Sigmoid colon (tissue), 7 donors: ENCODE measurements at regions of chr1 and their contacts with region 1.

Region 1: GRCh38 chr1:204128964-204129896 is 22.6 kb downstream of the ETNK2 start:
- DNase-seq: peak; percentile 91
- H3K4me3 ChIP-seq: peak overlapping the region in 3 of 4 donors; percentile 15 to 33 (median 24)
- H3K27ac ChIP-seq: peak overlapping the region; percentile 27 to 56 (median 42)
- H3K4me1 ChIP-seq: peaks cover 0 to 50% (median 40%) of the 10 kb centered on the region in 4 donors
- H3K27me3 ChIP-seq: no peaks in the 10 kb centered on the region
- CTCF ChIP-seq: peak; percentile 86 to 97 (median 92)
- EP300 ChIP-seq: no peak
- POLR2A ChIP-seq: no peak

Region 2: DNA sequence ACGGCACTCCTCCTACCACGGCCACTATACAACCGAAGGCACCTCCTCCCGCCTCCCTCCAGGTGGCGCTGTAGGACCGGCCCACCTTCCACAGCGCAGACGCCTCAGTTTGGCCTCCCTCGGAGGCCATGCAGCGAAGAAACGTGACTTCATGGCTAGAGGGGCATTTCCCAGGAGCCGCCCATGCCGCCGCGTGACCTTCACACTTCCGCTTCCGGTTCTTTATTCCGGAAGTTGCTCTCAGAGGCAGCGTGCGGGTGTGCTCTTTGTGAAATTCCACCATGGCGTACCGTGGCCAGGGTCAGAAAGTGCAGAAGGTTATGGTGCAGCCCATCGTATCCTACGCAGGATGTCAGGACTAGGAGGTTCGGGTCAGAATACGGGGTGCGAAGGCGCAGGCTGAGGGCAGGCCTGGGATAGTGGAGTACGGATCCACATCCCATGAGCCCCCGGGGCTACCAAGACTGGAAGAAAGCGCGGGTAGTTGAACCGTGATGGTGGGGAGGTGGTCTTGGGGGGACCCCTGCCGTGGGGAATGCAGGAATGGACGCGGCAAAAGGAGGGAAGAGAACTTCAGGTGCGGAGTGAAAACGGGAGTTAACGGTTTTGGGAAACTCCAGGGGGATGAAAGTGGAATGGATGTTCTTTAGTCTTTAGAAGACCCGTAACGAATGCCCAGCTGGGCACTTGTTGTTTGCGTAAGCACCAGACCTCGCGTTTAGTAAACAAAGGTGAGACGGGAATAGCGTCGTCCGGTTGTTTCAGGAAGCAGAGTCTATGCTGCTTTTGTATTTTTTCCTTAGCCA is 267.6 kb before region 1 on chr1 and contains the start of gene SNRPE:
- intact Hi-C with region 1: loop called (anchors 1 kb)
- DNase-seq: peak; percentile 98
- H3K4me3 ChIP-seq: peak within 1 kb of the TSS; percentile 61 to 92 (median 77)
- H3K27ac ChIP-seq: peak within 1 kb of the TSS; percentile 58 to 79 (median 71)
- H3K4me1 ChIP-seq: peaks cover 0 to 29% (median 25%) of the 10 kb centered on the region in 4 donors
- H3K27me3 ChIP-seq: no peaks in the 10 kb centered on the region
- CTCF ChIP-seq: peak; percentile 75 to 94 (median 88)
- EP300 ChIP-seq: peak in 1 of 4 donors; percentile 49
- POLR2A ChIP-seq: peak in 1 of 2 donors; percentile 30
- total RNA-seq, gene SNRPE: 23.1 to 66.0 (median 43.4) TPM

Region 3: DNA sequence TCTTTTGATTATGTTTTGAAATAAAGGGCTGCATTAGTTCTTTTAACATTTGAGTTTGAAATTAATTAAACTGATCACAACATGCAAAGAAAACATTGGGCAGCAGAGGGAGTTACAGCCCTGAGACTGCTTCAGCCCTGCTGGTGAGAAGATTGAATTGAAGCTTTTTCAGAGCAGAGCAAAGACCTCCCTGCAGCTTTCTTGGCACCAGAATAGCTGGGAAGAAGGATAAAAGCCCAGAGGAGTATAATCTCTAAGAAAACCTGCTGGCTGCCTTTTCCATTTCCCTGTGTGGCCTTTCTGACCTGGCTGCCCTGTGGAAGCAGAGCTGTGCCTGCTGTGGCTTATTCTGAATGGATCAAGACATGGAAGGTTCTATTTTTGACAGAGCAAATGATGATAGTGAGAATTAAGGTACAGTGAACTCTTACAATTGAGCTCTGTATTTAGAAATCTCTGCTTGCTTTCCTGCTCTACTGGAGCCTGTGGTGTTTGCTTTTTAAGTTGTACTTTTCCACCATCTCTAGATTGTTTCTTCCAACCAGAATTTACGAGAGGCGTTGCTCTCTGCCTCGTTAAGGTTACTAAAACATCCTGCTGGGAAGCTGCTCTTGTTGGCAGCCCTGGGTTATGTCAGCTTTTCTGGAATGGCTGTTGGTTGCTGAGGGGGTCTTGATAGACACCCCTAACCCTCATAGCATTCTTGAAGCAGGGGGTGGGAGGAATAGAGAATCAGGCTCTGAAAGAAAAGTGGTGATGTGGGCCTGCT is 257.9 kb before region 1 on chr1:
- intact Hi-C with region 1: loop called (anchors 1 kb)
- DNase-seq: peak; percentile 69
- H3K4me3 ChIP-seq: peak overlapping the region in 1 of 4 donors; percentile 2
- H3K27ac ChIP-seq: peak overlapping the region in 3 of 4 donors; percentile 77 to 80 (median 77)
- H3K4me1 ChIP-seq: peaks cover 0 to 25% (median 22%) of the 10 kb centered on the region in 4 donors
- H3K27me3 ChIP-seq: no peaks in the 10 kb centered on the region
- CTCF ChIP-seq: peak; percentile 85 to 98 (median 96)
- EP300 ChIP-seq: no peak
- POLR2A ChIP-seq: no peak

Region 4: DNA sequence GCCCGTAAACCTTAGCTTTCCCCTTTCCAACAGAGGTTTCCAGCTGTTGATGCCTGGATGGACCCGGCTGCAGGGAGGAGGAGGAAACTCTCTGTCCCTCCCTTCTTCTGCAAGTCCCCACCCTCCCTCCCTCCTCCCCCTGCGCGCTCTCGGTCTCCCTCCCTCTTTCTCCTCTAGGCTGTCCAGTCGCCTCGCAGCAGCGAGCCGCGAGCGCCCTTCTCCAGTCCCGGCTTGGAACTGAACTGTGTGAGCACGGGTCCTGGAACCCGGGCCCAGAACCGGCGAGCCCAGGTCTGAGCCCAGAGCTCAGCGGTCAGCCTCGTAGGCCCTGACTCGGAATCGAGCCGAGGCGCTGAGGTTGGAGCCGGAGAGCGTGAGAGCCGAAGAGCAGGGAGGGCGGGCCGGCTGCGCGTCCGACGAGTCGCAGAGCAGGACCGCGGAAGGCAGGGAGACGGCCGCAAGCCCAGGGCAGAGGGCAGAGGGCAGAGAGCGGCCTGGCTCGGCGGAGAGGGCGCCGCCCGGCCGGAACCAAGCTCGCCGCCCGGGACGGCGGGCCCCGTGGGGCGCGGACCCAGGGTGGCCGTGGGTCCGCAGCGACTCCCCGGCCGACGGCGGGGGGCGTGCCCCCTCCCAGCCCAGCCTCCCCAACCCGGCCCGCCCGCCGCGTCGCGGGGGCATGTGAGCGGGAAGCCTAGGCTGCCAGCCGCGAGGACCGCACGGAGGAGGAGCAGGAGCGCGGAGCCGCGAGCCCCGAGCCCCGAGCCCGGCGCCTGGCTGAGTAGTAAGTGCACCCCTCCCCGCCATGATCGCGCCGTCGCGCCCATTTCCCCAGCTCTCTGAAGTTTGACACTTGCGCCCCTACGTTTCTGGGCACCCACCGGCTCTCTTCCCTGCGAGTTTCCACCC is 56.0 kb before region 1 on chr1 and contains the start of gene SOX13:
- intact Hi-C with region 1: loop called (anchors 1 kb)
- DNase-seq: peak; percentile 97
- H3K4me3 ChIP-seq: peak within 1 kb of the TSS; percentile 81 to 92 (median 86)
- H3K27ac ChIP-seq: peak within 1 kb of the TSS; percentile 83 to 96 (median 94)
- H3K4me1 ChIP-seq: peaks cover 0 to 34% (median 31%) of the 10 kb centered on the region in 4 donors
- H3K27me3 ChIP-seq: no peaks in the 10 kb centered on the region
- CTCF ChIP-seq: no peak
- EP300 ChIP-seq: no peak
- POLR2A ChIP-seq: peak; percentile 96
- total RNA-seq, gene SOX13: 28.5 to 58.4 (median 30.0) TPM

Region 5: GRCh38 chr1:204089044-204089751 is 40.0 kb before region 1 on chr1:
- intact Hi-C with region 1: loop called (anchors 1 kb)
- DNase-seq: peak; percentile 97
- H3K4me3 ChIP-seq: peak overlapping the region in 3 of 4 donors; percentile 27 to 36 (median 33)
- H3K27ac ChIP-seq: peak overlapping the region; percentile 81 to 98 (median 96)
- H3K4me1 ChIP-seq: peaks cover 0 to 98% (median 94%) of the 10 kb centered on the region in 4 donors
- H3K27me3 ChIP-seq: no peaks in the 10 kb centered on the region
- CTCF ChIP-seq: no peak
- EP300 ChIP-seq: peak; percentile 85 to 96 (median 89)
- POLR2A ChIP-seq: no peak

Region 6: DNA sequence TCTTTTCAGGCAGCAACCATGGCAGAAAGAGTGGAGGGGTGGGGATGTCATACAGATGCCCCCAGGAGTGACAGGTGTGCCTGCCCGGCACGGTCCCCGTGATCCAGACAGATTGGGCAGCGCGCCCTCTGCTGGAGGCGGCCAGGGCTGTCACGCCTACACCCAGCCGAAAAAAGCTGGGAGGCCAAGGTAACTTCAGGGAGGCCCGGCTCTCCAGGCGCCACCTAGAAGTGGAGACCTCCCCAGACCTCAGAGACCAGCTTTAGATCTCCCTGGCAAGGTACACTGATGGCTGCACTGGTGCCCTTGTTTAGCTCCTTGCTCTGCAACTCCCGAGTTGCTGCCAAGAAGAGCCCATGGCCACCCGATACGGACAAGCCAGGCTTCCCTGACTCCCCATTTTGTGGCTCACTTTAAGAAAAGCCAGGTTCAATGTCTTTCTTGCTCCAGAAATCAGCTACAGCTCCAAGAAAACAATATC is 77.9 kb after region 1 on chr1:
- intact Hi-C with region 1: no loop called
- DNase-seq: peak; percentile 77
- H3K4me3 ChIP-seq: no peak overlapping the region
- H3K27ac ChIP-seq: no peak overlapping the region
- H3K4me1 ChIP-seq: peaks cover 0 to 6% (median 2%) of the 10 kb centered on the region in 4 donors
- H3K27me3 ChIP-seq: peaks cover 0 to 42% (median 0%) of the 10 kb centered on the region in 3 donors
- CTCF ChIP-seq: peak; percentile 53 to 88 (median 71)
- EP300 ChIP-seq: no peak
- POLR2A ChIP-seq: no peak